Activated naive CD4-positive, alpha-beta T cell treated with anti-CD3 and anti-CD28 coated beads for 36 hours (primary cell): ENCODE measurements at regions of chr6 and their contacts with region 1.

Region 1: GRCh38 chr6:73732845-73733675 is 37.1 kb downstream of the CD109 start:
- DNase-seq: peak; percentile 87
- H3K4me3 Mint-ChIP-seq: no peak overlapping the region
- H3K27ac Mint-ChIP-seq: no peak overlapping the region
- H3K4me1 Mint-ChIP-seq: peaks cover 14% of the 10 kb centered on the region
- H3K27me3 Mint-ChIP-seq: no peaks in the 10 kb centered on the region

Region 2: GRCh38 chr6:73062837-73063236 is 670.2 kb before region 1 on chr6:
- CTCF ChIA-PET with region 1: no interaction called
- intact Hi-C with region 1: no loop called
- DNase-seq: no peak
- H3K4me3 Mint-ChIP-seq: no peak overlapping the region
- H3K27ac Mint-ChIP-seq: no peak overlapping the region
- H3K4me1 Mint-ChIP-seq: no peaks in the 10 kb centered on the region
- H3K27me3 Mint-ChIP-seq: no peaks in the 10 kb centered on the region

Region 3: GRCh38 chr6:73285674-73286283 is 447.3 kb before region 1 on chr6:
- CTCF ChIA-PET with region 1: no interaction called
- intact Hi-C with region 1: no loop called
- DNase-seq: no peak
- H3K4me3 Mint-ChIP-seq: no peak overlapping the region
- H3K27ac Mint-ChIP-seq: no peak overlapping the region
- H3K4me1 Mint-ChIP-seq: no peaks in the 10 kb centered on the region
- H3K27me3 Mint-ChIP-seq: no peaks in the 10 kb centered on the region

Region 4: DNA sequence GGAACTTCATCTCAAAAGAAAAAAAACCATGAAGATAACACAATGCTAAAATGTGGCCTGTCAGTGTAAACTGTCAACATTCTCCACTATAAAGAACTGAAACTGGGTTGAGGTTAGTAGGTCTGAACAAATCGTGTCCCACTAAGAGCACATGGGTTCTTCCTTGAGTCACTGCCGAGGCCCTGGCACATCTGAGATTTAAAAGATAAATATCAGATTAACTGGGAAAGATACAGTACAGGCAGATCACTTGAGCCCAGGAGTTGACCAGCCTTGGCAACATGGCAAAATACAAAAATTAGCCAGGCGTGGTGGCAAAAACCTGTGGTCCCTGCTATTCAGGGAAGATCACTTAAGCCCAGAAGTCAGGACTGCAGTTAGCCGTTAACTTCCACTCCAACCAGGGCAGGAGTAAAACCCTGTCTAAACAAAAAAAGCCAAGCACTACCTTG is 217.8 kb before region 1 on chr6:
- CTCF ChIA-PET with region 1: no interaction called
- intact Hi-C with region 1: loop called (anchors 2 kb)
- DNase-seq: no peak
- H3K4me3 Mint-ChIP-seq: peak overlapping the region; percentile 4
- H3K27ac Mint-ChIP-seq: peak overlapping the region; percentile 83
- H3K4me1 Mint-ChIP-seq: peaks cover 24% of the 10 kb centered on the region
- H3K27me3 Mint-ChIP-seq: peaks cover 4% of the 10 kb centered on the region

Region 5: DNA sequence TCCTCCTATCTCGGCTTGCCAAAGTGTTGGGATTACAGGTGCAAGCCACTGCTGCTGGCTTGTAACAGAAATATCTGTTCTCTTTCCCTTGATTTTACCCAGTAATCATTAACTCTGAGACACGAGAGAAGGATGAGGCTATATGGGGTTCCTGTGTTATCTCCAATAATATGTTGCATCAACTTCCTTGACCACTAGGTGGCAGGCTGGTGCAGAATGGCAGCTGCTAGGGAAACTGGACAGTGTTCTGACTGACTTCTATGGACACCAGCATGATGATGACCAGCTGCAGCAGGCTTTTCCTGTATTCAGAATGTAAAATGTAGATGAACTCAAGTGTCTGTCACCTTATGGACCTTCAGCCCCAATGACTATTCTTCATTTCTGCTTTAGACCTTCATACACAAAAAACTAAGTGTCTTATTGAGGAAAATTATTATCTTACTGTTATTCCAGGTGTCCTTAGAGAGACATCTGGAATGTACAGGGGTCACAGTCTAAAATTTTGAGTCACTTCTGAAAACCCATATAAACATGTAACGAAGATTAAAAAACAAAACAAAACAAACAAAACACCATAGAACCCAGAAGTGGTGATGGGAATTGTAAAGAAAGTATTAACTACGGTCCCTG is 57.5 kb before region 1 on chr6:
- CTCF ChIA-PET with region 1: interaction called, 185 read pairs
- intact Hi-C with region 1: loop called (anchors 1 kb)
- DNase-seq: peak; percentile 87
- H3K4me3 Mint-ChIP-seq: no peak overlapping the region
- H3K27ac Mint-ChIP-seq: no peak overlapping the region
- H3K4me1 Mint-ChIP-seq: no peaks in the 10 kb centered on the region
- H3K27me3 Mint-ChIP-seq: peaks cover 8% of the 10 kb centered on the region

Region 6: DNA sequence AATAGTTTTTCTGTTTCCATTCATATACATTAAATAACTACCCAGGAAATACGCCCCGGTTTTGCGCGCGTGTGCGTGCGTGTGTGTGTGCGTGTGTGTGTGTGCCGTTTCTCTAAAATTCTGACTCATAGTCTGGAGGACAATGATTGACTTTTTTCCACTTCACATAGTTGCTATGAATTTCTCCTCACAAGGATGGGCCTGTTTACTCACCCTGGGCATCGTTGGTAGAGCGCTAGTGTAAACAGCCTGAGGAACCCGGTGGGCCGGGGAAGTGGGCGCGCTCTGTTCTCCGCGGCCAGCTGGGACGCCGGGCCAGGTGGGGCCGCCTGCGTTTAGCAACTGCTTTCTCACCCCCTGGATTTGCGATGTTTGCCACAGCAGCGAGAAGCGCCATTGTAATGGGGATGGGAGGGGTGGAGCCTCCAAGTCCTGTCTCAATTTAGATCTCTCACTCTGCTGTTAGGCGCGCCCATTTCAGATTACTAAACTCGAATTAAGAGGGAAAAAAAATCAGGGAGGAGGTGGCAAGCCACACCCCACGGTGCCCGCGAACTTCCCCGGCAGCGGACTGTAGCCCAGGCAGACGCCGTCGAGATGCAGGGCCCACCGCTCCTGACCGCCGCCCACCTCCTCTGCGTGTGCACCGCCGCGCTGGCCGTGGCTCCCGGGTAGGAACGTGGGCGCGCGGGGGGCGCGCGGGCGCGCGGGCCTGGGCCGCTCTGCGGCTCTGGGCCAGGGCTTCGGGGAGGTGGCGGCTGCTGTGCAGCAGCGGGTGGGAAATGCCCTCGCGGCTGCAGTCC is 37.2 kb before region 1 on chr6 and contains the start of gene CD109:
- CTCF ChIA-PET with region 1: interaction called, 10 read pairs
- intact Hi-C with region 1: loop called (anchors 1 kb)
- DNase-seq: peak; percentile 89
- H3K4me3 Mint-ChIP-seq: peak within 1 kb of the TSS; percentile 92
- H3K27ac Mint-ChIP-seq: peak within 1 kb of the TSS; percentile 96
- H3K4me1 Mint-ChIP-seq: peaks cover 44% of the 10 kb centered on the region
- H3K27me3 Mint-ChIP-seq: peaks cover 9% of the 10 kb centered on the region
- total RNA-seq, gene CD109: 6.7 to 7.6 TPM

Region 7: GRCh38 chr6:73722318-73723060 is 10.6 kb before region 1 on chr6:
- CTCF ChIA-PET with region 1: interaction called, 17 read pairs
- intact Hi-C with region 1: no loop called
- DNase-seq: peak; percentile 55
- H3K4me3 Mint-ChIP-seq: no peak overlapping the region
- H3K27ac Mint-ChIP-seq: peak overlapping the region; percentile 15
- H3K4me1 Mint-ChIP-seq: peaks cover 27% of the 10 kb centered on the region
- H3K27me3 Mint-ChIP-seq: no peaks in the 10 kb centered on the region

Region 8: DNA sequence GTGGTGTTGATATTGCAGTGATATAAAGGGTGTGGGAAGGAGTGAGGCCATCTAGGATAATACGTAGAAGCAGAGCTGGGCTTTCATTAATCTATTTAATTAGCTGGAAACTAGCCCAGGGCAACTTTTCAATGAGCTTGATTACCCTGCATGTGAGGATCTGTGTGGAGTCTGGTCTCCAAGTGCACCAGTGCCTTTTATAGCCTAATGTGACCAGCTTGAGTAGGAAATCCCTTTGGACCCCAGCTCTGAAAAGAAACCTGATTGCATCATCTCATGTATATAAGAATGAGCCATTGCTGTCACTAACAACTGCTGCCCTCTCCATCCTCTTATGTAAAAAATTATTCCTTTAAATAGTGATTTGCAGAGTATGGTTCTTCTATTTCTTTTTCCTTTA is 35.5 kb after region 1 on chr6:
- CTCF ChIA-PET with region 1: interaction called, 16 read pairs
- intact Hi-C with region 1: no loop called
- DNase-seq: no peak
- H3K4me3 Mint-ChIP-seq: no peak overlapping the region
- H3K27ac Mint-ChIP-seq: no peak overlapping the region
- H3K4me1 Mint-ChIP-seq: no peaks in the 10 kb centered on the region
- H3K27me3 Mint-ChIP-seq: no peaks in the 10 kb centered on the region

Region 9: DNA sequence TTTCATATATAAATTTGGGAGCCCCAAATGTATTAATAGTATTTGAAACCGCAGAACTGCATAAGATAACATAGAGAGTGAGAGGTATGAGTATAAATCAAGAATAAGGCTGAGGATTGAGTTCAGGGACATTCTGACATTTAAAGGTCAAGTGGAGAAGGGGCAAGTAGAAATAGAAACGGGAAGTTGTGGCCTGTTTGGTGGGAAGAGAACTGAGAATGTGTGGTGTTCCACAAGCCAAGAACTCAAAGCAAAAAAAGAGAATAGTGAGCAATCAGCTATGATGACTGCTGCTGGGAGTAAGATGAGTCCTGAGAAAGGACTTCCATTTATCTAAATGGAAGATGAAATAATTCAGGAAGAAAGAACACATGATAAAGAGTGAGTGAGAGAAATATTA is 381.4 kb after region 1 on chr6:
- CTCF ChIA-PET with region 1: no interaction called
- intact Hi-C with region 1: no loop called
- DNase-seq: no peak
- H3K4me3 Mint-ChIP-seq: no peak overlapping the region
- H3K27ac Mint-ChIP-seq: no peak overlapping the region
- H3K4me1 Mint-ChIP-seq: no peaks in the 10 kb centered on the region
- H3K27me3 Mint-ChIP-seq: no peaks in the 10 kb centered on the region